Aorta (tissue), 5 donors: ENCODE measurements at regions of chr15 and their contacts with region 1.

Region 1: DNA sequence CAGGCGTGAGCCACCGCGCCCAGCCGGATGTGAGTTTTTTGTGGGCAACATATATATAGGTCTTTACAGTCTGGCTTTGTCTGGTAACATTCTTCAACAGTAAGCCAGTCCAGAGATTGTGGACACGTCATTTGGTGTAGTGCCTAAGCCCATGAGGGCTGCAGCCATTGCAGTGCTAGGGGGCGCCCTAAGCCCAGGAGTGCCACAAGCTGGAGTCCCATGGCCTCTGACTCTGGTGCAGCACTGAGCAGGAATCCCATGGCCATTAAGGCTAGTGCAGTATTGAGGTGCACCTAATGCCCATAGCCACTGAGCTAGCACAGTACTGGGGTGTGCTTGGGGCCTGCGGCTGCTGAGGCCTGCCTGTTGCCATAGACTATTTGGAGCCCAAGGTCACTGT is 136.4 kb upstream of the NDN start:
- DNase-seq: no peak
- ATAC-seq: no peak
- H3K4me3 ChIP-seq: no peak overlapping the region
- H3K27ac ChIP-seq: no peak overlapping the region
- H3K4me1 ChIP-seq: no peaks in the 10 kb centered on the region
- H3K27me3 ChIP-seq: no peaks in the 10 kb centered on the region

Region 2: DNA sequence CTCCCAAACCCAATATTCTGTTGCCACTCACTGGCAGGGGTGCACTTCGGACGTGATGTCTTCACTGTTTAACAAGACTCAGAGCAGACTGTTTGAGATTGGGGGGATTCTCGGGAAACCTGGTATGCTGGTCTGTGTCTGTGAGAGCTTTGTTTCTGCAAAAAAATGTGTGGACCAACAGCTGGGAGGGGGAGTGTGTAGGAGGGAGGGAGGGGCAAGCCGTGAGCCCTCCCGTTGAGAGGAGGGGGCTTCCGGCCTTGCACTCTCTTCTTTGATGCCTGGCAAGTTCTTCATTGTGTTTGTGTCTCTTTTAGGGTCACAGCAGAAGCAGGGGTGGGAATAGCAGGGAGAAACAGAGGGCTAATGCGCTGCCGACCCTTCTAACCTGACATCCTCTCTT is 61.5 kb before region 1 on chr15:
- intact Hi-C with region 1: no loop called
- DNase-seq: no peak
- ATAC-seq: no peak
- H3K4me3 ChIP-seq: no peak overlapping the region
- H3K27ac ChIP-seq: no peak overlapping the region
- H3K4me1 ChIP-seq: no peaks in the 10 kb centered on the region
- H3K27me3 ChIP-seq: no peaks in the 10 kb centered on the region

Region 3: GRCh38 chr15:23897531-23897930 is 74.0 kb after region 1 on chr15:
- intact Hi-C with region 1: loop called in 1 of 2 experiments (anchors 10 kb)
- DNase-seq: peak in 1 of 2 donors; percentile 76
- ATAC-seq: peak; percentile 57
- H3K4me3 ChIP-seq: no peak overlapping the region
- H3K27ac ChIP-seq: no peak overlapping the region
- H3K4me1 ChIP-seq: no peaks in the 10 kb centered on the region
- H3K27me3 ChIP-seq: no peaks in the 10 kb centered on the region